Esophagus squamous epithelium (tissue), 5 donors: ENCODE measurements at regions of chr22 and their contacts with region 1.

Region 1: DNA sequence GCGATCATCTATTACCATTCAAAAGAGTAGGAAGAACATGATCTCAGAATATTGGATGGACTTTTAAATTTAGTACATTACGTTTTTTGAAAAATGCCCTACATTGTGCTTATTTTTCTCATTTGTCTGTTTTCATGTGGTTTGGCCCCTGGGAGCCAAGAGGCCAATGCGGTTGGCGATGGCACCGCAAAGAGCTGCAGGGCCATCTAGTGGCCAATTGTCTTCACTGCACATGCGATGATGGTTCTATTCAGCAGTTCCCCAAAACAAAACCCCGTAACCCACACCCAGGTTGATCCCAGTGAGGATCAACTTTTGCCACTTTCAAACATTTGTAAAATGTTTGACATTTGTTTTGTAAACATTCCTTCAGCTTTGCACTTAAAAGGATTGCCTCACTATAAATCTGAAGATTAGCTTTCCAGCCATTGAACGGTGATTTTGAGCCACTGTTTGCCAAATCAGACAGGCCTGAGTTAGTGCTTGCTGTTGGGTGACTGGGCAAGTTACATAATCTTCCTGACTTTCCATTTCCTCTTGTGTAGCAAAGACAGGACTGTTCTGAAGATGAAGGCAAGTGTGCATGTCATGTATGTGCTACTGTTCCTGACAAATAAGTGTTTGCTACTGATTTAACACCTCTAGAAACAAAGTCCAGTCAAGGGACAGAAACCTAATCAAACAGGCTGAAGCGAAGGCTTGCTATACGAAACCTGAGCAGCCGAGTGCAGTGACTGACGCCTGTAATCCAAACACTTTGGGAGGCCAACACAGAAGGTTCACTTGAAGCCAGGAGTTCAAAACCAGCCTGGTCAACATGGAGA is 29.2 kb upstream of the XBP1 start:
- DNase-seq: no peak
- H3K4me3 ChIP-seq: no peak overlapping the region
- H3K27ac ChIP-seq: peak overlapping the region in 2 of 4 donors; percentile 13 to 32
- H3K4me1 ChIP-seq: peaks cover 4 to 13% (median 9%) of the 10 kb centered on the region in 3 donors
- H3K27me3 ChIP-seq: no peaks in the 10 kb centered on the region
- CTCF ChIP-seq: peak; percentile 92 to 98 (median 97)
- POLR2A ChIP-seq: no peak

Region 2: GRCh38 chr22:28600546-28601143 is 228.9 kb before region 1 on chr22:
- intact Hi-C with region 1: loop called (anchors 5 kb)
- DNase-seq: no peak
- H3K4me3 ChIP-seq: no peak overlapping the region
- H3K27ac ChIP-seq: no peak overlapping the region
- H3K4me1 ChIP-seq: no peaks in the 10 kb centered on the region
- H3K27me3 ChIP-seq: no peaks in the 10 kb centered on the region
- CTCF ChIP-seq: peak; percentile 36 to 67 (median 51)
- POLR2A ChIP-seq: no peak

Region 3: GRCh38 chr22:28800308-28801077 is 29.1 kb before region 1 on chr22 and contains the start of gene XBP1:
- intact Hi-C with region 1: no loop called
- DNase-seq: peak; percentile 58
- H3K4me3 ChIP-seq: peak within 1 kb of the TSS; percentile 67 to 100 (median 92)
- H3K27ac ChIP-seq: peak within 1 kb of the TSS; percentile 95 to 100 (median 100)
- H3K4me1 ChIP-seq: peaks cover 20 to 79% (median 31%) of the 10 kb centered on the region in 3 donors
- H3K27me3 ChIP-seq: no peaks in the 10 kb centered on the region
- CTCF ChIP-seq: no peak
- POLR2A ChIP-seq: peak in 3 of 4 donors; percentile 98 to 100 (median 99)
- total RNA-seq, gene XBP1: 111 to 166 (median 131) TPM

Region 4: GRCh38 chr22:28989035-28989464 is 159.5 kb after region 1 on chr22:
- intact Hi-C with region 1: no loop called
- DNase-seq: no peak
- H3K4me3 ChIP-seq: no peak overlapping the region
- H3K27ac ChIP-seq: no peak overlapping the region
- H3K4me1 ChIP-seq: peaks cover 3 to 7% (median 6%) of the 10 kb centered on the region in 3 donors
- H3K27me3 ChIP-seq: no peaks in the 10 kb centered on the region
- CTCF ChIP-seq: no peak
- POLR2A ChIP-seq: no peak

Region 5: DNA sequence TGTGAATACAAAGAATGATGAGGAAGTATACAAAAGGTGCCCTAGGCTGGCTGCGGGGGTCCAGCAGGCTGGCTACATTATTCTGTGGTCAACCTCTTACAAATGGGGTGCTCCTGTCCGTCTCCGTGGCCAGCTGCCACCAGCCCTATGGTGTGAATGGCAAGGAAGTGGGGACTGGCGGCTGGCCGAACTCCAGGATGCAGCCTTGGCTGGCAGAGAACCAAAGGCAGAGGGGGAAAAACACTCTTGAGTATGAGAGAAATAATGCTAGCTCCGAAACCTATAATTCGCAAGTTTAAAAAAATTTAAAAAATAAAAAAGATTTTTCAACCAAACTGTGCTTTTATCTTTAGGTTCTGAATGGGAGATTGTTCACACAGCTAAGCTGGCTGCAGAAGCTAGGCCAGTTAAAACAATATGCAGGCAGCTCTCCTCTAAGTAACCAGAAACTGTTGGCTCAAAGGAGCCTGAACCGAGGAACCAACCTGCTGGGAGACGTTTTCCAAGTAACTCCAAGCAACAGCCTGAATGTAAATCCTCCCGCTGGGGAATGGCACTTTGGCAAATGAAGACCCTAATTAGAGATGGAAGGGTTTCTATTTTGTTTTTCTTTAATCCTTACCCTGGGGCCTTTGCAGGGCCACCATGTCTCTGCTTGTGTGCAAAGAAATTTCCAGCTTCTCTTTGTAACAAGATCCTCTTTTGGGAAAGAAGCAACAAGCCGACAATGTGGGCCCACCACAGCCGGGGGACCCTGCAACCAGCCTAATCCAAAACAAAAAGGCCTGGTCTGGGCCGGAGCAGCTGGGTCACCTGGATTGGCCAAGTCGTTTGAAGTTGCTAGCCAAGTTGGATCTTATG is 181.9 kb after region 1 on chr22:
- intact Hi-C with region 1: no loop called
- DNase-seq: no peak
- H3K4me3 ChIP-seq: no peak overlapping the region
- H3K27ac ChIP-seq: no peak overlapping the region
- H3K4me1 ChIP-seq: peaks cover 0 to 13% (median 2%) of the 10 kb centered on the region in 3 donors
- H3K27me3 ChIP-seq: no peaks in the 10 kb centered on the region
- CTCF ChIP-seq: no peak
- POLR2A ChIP-seq: no peak